ENCODE measurements at regions of chr5 and their contacts with region 1.

Region 1: GRCh38 chr5:138542956-138543729 is at the start of gene ETF1:
- DNase-seq: peak; percentile 98
- H3K4me3 ChIP-seq: peak within 1 kb of the TSS; percentile 87
- H3K27me3 ChIP-seq: no peaks in the 10 kb centered on the region
- CTCF ChIP-seq: no peak
- polyA plus RNA-seq, gene ETF1: 52.4 and 86.4 TPM in 2 replicates

Region 2: GRCh38 chr5:138185957-138186447 is 357.1 kb before region 1 on chr5:
- CTCF ChIA-PET with region 1: no interaction called
- POLR2A ChIA-PET with region 1: interaction called, 10 read pairs
- DNase-seq: no peak
- H3K4me3 ChIP-seq: no peak overlapping the region
- H3K27me3 ChIP-seq: no peaks in the 10 kb centered on the region
- CTCF ChIP-seq: no peak

Region 3: GRCh38 chr5:138464008-138464387 is 79.1 kb before region 1 on chr5:
- CTCF ChIA-PET with region 1: interaction called, 27 read pairs
- POLR2A ChIA-PET with region 1: interaction called, 6 read pairs
- DNase-seq: peak; percentile 71
- H3K4me3 ChIP-seq: peak overlapping the region; percentile 84
- H3K27me3 ChIP-seq: no peaks in the 10 kb centered on the region
- CTCF ChIP-seq: peak; percentile 79

Region 4: GRCh38 chr5:138559937-138560336 is 16.8 kb after region 1 on chr5:
- CTCF ChIA-PET with region 1: interaction called, 16 read pairs
- POLR2A ChIA-PET with region 1: no interaction called
- DNase-seq: no peak
- H3K4me3 ChIP-seq: no peak overlapping the region
- H3K27me3 ChIP-seq: no peaks in the 10 kb centered on the region
- CTCF ChIP-seq: no peak